ENCODE measurements at regions of chr14 and their contacts with region 1.

Region 1: GRCh38 chr14:30558675-30559555 is at the start of gene G2E3:
- DNase-seq: peak; percentile 91
- H3K4me3 Mint-ChIP-seq: peak within 1 kb of the TSS; percentile 98
- H3K27ac Mint-ChIP-seq: peak within 1 kb of the TSS; percentile 99
- H3K4me1 Mint-ChIP-seq: peaks cover 14% of the 10 kb centered on the region
- H3K27me3 Mint-ChIP-seq: no peaks in the 10 kb centered on the region
- CTCF ChIP-seq: no peak
- total RNA-seq, gene G2E3: 34.1 and 34.7 TPM in 2 replicates

Region 2: GRCh38 chr14:30573226-30573814 is 14.4 kb after region 1 on chr14:
- CTCF ChIA-PET with region 1: no interaction called
- POLR2A ChIA-PET with region 1: interaction called, 11 read pairs
- intact Hi-C with region 1: no loop called
- DNase-seq: peak; percentile 62
- H3K4me3 Mint-ChIP-seq: no peak overlapping the region
- H3K27ac Mint-ChIP-seq: peak overlapping the region; percentile 92
- H3K4me1 Mint-ChIP-seq: peaks cover 52% of the 10 kb centered on the region
- H3K27me3 Mint-ChIP-seq: no peaks in the 10 kb centered on the region
- CTCF ChIP-seq: no peak

Region 3: GRCh38 chr14:30610787-30611343 is 52.0 kb after region 1 on chr14:
- CTCF ChIA-PET with region 1: interaction called, 4 read pairs
- POLR2A ChIA-PET with region 1: interaction called, 12 read pairs
- intact Hi-C with region 1: loop called (anchors 2 kb)
- DNase-seq: peak; percentile 89
- H3K4me3 Mint-ChIP-seq: peak overlapping the region; percentile 69
- H3K27ac Mint-ChIP-seq: peak overlapping the region; percentile 69
- H3K4me1 Mint-ChIP-seq: peaks cover 30% of the 10 kb centered on the region
- H3K27me3 Mint-ChIP-seq: no peaks in the 10 kb centered on the region
- CTCF ChIP-seq: peak; percentile 18

Region 4: DNA sequence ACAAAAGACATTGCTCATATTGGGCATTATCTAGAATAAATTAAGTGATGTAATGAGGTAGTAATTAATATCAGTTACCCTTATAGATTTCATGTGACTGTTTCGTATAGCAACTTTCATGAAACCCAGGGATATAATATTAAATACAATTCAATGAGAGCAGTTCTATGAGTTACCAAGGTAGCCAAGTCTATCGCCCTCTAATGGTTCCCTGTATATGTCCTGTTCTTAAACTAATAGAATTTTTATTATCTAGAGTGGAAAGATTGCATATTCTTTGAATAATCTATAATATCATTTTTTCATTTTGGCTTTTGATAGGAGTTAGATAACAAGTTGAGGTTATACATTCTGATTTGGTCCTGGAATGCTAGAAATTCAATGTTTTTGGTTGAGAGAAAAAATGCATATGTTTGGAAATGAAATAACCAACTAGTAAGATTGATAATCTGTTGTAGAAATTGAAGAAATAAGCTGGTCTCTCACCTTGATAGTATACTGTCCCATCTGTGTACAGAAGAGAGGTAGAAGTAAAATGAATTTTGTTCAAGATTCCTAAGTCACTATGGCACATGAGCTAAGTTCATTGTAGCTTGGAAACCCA is 122.9 kb after region 1 on chr14:
- CTCF ChIA-PET with region 1: no interaction called
- POLR2A ChIA-PET with region 1: no interaction called
- intact Hi-C with region 1: no loop called
- DNase-seq: peak; percentile 11
- H3K4me3 Mint-ChIP-seq: no peak overlapping the region
- H3K27ac Mint-ChIP-seq: no peak overlapping the region
- H3K4me1 Mint-ChIP-seq: no peaks in the 10 kb centered on the region
- H3K27me3 Mint-ChIP-seq: no peaks in the 10 kb centered on the region
- CTCF ChIP-seq: peak; percentile 33

Measured in MCF 10A (cell line).